PC-9 (cell line): ENCODE measurements at regions of chr6 and their contacts with region 1.

Region 1: GRCh38 chr6:41591859-41592502 is 45.8 kb downstream of the FOXP4 start:
- DNase-seq: peak; percentile 53 to 71
- H3K4me3 ChIP-seq: no peak overlapping the region
- H3K27ac ChIP-seq: no peak overlapping the region
- H3K4me1 ChIP-seq: no peaks in the 10 kb centered on the region
- H3K27me3 ChIP-seq: no peaks in the 10 kb centered on the region
- CTCF ChIP-seq: peak; percentile 95

Region 2: GRCh38 chr6:41404182-41404845 is 187.7 kb before region 1 on chr6:
- CTCF ChIA-PET with region 1: no interaction called
- POLR2A ChIA-PET with region 1: no interaction called
- intact Hi-C with region 1: no loop called
- DNase-seq: no peak
- H3K4me3 ChIP-seq: no peak overlapping the region
- H3K27ac ChIP-seq: no peak overlapping the region
- H3K4me1 ChIP-seq: no peaks in the 10 kb centered on the region
- H3K27me3 ChIP-seq: peaks cover 56% of the 10 kb centered on the region; the same call in 1 of the 2 replicates
- CTCF ChIP-seq: no peak

Region 3: DNA sequence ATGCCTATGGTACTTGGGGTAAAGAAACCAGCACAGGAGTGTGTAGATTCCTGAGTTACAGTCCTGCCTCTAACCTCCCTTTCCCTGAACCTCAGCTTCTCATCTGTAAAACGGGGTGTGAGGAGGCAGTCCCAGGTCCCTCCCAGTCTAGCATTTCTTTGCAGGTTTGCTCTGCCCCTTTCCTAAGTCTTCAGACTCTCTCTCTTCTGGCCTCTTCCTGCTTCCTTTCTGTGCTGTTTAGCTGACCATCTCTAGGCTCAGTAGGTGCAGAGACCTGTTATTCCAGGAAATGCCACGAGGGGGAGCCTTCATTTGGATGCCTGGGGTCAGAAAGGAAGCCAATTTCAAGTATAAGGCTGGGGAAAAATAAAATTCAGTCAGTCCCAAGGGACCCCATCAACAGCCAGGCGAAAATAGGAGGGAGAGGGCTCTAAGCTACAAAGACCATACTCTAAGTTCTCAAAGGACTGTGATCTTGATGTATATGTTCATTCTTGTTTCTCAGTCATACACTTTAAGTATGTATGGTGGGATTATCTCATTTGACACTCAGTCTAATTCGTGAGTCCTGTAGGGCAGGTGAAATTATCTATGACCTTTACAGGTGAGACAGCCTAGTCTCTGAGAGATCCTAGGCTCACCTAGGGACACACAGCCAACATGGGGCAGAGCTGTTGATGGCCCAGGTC is 167.5 kb before region 1 on chr6:
- CTCF ChIA-PET with region 1: no interaction called
- POLR2A ChIA-PET with region 1: no interaction called
- intact Hi-C with region 1: loop called (anchors 1 kb)
- DNase-seq: peak; percentile 48 to 81
- H3K4me3 ChIP-seq: no peak overlapping the region
- H3K27ac ChIP-seq: no peak overlapping the region
- H3K4me1 ChIP-seq: peaks cover 6% of the 10 kb centered on the region; the same call in 1 of the 2 replicates
- H3K27me3 ChIP-seq: peaks cover 29% of the 10 kb centered on the region
- CTCF ChIP-seq: peak; percentile 95

Region 4: GRCh38 chr6:41636833-41637193 is 44.8 kb after region 1 on chr6:
- CTCF ChIA-PET with region 1: no interaction called
- POLR2A ChIA-PET with region 1: no interaction called
- intact Hi-C with region 1: loop called (anchors 1 kb)
- DNase-seq: peak; percentile 73 to 86
- H3K4me3 ChIP-seq: peak overlapping the region; percentile 85
- H3K27ac ChIP-seq: peak overlapping the region; percentile 58
- H3K4me1 ChIP-seq: peaks cover 12% of the 10 kb centered on the region
- H3K27me3 ChIP-seq: no peaks in the 10 kb centered on the region
- CTCF ChIP-seq: no peak

Region 5: DNA sequence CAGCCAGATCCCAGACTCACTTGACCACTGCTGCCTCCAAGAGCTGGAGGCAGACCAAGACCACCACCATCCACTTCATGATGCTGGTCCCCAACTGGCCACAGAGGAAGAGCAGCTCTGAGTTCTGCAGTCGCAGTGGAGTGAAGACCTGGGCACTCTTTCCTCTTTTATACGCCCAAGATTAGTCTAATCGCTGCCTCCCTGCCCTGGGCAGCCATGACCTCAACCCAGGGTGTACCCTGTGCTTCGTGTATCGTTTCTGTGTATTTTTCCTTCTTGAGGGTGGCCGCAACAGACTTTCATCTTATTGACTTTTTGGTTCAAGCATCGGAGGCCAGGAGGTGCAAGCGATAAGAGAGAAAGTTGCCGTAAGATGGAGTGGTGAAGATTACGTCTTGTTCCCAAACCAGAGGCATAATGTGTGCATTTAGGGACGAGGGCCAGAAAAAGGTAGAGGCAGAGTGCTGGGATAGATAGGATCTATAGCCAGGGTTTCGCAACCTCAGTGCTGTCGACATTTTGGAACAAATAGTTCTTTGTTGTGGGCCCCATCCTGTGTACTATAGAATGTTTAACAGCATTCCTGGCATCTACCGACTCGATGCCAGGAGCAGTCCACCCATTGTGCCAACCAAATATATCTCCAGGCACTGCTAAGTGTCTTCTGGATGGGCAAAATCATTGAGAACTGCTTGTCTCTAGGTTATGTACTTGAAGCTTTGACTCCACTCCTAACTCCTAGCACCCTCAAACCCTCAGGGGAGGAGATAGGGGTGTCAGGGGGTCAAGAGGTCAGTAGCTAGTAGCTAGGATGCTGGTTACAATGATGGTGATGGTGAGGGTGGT is 155.5 kb after region 1 on chr6 and contains the start of gene PGC:
- CTCF ChIA-PET with region 1: no interaction called
- POLR2A ChIA-PET with region 1: no interaction called
- intact Hi-C with region 1: no loop called
- DNase-seq: peak in 1 of 2 experiments; percentile 52
- H3K4me3 ChIP-seq: no peak within 1 kb of the TSS
- H3K27ac ChIP-seq: no peak within 1 kb of the TSS
- H3K4me1 ChIP-seq: peaks cover 28% of the 10 kb centered on the region
- H3K27me3 ChIP-seq: no peaks in the 10 kb centered on the region
- CTCF ChIP-seq: no peak
- total RNA-seq, gene PGC: not detected in 2 replicates

Region 6: DNA sequence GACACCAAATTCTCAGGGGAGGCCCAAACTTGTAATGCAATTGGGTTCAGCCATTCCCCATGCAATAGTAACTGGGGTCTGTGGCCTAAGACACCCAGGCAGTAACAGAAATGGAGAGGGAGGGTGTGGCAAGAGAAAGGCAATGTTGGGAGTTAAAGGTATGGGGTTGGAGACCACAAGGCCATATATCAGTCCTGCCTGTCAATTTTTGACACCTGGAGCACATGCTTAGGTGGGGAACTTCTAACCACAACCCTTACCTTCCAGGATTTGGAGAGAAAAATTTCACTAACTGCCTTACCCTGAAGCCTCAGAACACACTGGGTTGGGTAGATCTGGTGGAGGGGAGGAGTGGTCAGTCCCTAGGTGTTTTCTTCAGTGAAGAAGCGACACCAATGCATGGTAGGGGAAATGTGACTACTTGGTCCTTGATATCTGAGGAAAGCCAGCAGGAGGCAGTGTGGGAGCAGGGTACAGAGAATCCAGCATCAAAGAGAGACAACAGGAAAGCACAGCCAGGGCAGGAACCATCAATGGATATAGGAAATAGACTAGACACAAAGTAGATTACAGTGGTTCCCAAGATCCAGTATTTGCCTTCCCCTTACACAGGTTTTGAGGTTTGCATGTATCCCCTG is 310.0 kb after region 1 on chr6:
- CTCF ChIA-PET with region 1: no interaction called
- POLR2A ChIA-PET with region 1: no interaction called
- intact Hi-C with region 1: no loop called
- DNase-seq: no peak
- H3K4me3 ChIP-seq: no peak overlapping the region
- H3K27ac ChIP-seq: no peak overlapping the region
- H3K4me1 ChIP-seq: peaks cover 4% of the 10 kb centered on the region; the same call in 1 of the 2 replicates
- H3K27me3 ChIP-seq: no peaks in the 10 kb centered on the region
- CTCF ChIP-seq: peak; percentile 21; the same call in 1 of the 2 replicates